Upper lobe of right lung (tissue), 1 donor: ENCODE measurements at regions of chr15 and their contacts with region 1.

Region 1: GRCh38 chr15:65184868-65185738 is at the start of gene CLPX:
- DNase-seq: peak; percentile 96
- ATAC-seq: peak; percentile 98
- H3K4me3 ChIP-seq: peak within 1 kb of the TSS; percentile 93
- H3K27ac ChIP-seq: peak within 1 kb of the TSS; percentile 91
- H3K4me1 ChIP-seq: peaks cover 21% of the 10 kb centered on the region
- H3K27me3 ChIP-seq: no peaks in the 10 kb centered on the region
- CTCF ChIP-seq: no peak
- total RNA-seq, gene CLPX: 38.2 TPM

Region 2: GRCh38 chr15:65217526-65218482 is 32.7 kb after region 1 on chr15:
- intact Hi-C with region 1: no loop called
- DNase-seq: no peak
- ATAC-seq: no peak
- H3K4me3 ChIP-seq: no peak overlapping the region
- H3K27ac ChIP-seq: no peak overlapping the region
- H3K4me1 ChIP-seq: no peaks in the 10 kb centered on the region
- H3K27me3 ChIP-seq: no peaks in the 10 kb centered on the region
- CTCF ChIP-seq: no peak

Region 3: GRCh38 chr15:65304389-65305144 is 119.5 kb after region 1 on chr15 and contains the start of gene RNU5B-1:
- intact Hi-C with region 1: loop called (anchors 10 kb)
- DNase-seq: peak; percentile 75
- ATAC-seq: peak; percentile 93
- H3K4me3 ChIP-seq: peak within 1 kb of the TSS; percentile 69
- H3K27ac ChIP-seq: peak within 1 kb of the TSS; percentile 96
- H3K4me1 ChIP-seq: peaks cover 13% of the 10 kb centered on the region
- H3K27me3 ChIP-seq: no peaks in the 10 kb centered on the region
- CTCF ChIP-seq: peak; percentile 86
- total RNA-seq, gene RNU5B-1: 21.6 TPM

Region 4: GRCh38 chr15:65344214-65344917 is 159.3 kb after region 1 on chr15:
- intact Hi-C with region 1: no loop called
- DNase-seq: no peak
- ATAC-seq: no peak
- H3K4me3 ChIP-seq: no peak overlapping the region
- H3K27ac ChIP-seq: no peak overlapping the region
- H3K4me1 ChIP-seq: no peaks in the 10 kb centered on the region
- H3K27me3 ChIP-seq: no peaks in the 10 kb centered on the region
- CTCF ChIP-seq: no peak

Region 5: DNA sequence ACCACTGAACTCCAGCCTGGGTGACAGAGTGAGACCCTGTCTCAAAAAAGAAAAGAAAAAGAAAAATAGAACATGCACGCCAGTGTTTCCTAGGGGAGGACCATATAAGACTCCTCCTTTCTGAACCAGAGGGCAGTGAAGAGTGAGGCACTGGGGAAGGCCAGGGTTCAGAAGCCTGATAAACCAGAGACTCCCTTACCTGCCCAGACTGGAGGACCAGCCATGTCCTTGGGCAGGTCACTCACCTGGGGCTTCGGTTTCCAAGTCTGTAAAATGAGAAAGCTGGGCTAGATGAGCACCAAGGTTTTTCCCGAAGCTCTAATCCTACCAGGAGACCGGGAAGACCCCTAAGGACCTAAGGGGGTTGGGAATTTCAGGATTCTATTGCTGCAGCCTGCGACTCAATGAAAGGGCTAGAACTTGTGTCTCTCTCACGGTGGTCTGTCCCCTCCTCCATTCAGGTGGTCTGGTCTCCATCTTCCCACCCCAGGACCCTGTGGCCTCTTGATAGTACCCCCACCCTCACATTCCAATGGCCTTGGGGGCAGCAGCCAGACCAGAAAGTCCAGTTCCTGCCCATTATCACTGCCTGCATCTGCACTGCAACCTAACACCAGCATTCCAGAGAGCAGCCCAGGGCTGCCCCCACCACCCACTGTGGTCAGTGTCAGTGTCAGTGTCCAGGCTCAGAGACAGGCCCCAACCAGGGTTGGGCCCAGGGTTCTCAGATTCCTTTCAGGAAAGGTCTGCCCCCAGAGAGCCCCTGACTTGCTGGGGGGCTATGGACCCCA is 179.9 kb after region 1 on chr15:
- intact Hi-C with region 1: no loop called
- DNase-seq: peak; percentile 25
- ATAC-seq: no peak
- H3K4me3 ChIP-seq: no peak overlapping the region
- H3K27ac ChIP-seq: no peak overlapping the region
- H3K4me1 ChIP-seq: no peaks in the 10 kb centered on the region
- H3K27me3 ChIP-seq: peaks cover 4% of the 10 kb centered on the region
- CTCF ChIP-seq: no peak